Common myeloid progenitor, CD34-positive (primary cell): ENCODE measurements at regions of chr5 and their contacts with region 1.

Region 1: DNA sequence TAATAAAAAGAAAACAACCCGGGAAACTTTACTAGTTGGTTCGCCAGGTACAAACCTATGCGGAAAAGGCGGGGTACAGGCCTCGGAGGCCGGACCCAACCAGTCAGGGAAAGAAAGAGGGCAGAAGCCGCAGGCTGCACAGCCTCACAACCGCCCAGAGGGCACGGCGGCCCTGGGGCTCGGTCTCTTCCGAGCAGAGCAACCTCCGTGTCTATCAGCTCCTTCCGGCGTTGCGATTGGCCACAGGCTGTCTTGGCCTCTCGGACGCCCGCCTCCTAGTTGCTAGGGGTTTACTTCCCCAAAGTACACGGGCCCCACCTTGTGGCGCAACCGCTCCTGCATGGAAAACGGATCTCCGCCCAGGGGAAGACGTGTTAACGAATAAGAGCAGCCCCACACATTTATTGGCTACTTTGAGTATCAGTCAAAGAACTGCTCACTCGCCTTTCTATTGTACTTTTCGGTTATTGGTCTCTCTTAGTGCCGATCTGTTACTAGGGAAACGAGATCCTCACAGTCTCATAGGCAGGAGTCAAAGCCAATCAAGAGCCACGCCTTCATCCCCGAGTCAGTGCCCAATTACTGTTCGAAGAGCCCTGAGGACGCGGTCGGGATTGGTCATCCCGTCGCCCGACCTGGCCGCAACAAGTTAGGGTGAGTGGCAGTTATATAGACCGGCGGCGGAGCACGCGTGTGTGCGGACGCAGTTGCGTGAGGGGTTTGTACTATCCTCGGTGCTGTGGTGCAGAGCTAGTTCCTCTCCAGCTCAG is at the start of gene G3BP1:
- DNase-seq: peak; percentile 100
- H3K4me3 ChIP-seq: peak within 1 kb of the TSS; percentile 68 to 98 (median 92)
- H3K27ac ChIP-seq: peak within 1 kb of the TSS; percentile 93 to 96
- H3K4me1 ChIP-seq: peaks cover 15 to 48% (median 33%) of the 10 kb centered on the region in 4 experiments
- H3K27me3 ChIP-seq: no peaks in the 10 kb centered on the region

Region 2: GRCh38 chr5:151758430-151759241 is 12.8 kb before region 1 on chr5 and contains the start of gene ATOX1:
- CTCF ChIA-PET with region 1: interaction called, 38 read pairs
- POLR2A ChIA-PET with region 1: interaction called, 9 read pairs
- DNase-seq: peak; percentile 82 to 90 (median 90)
- H3K4me3 ChIP-seq: peak within 1 kb of the TSS; percentile 74 to 96 (median 83)
- H3K27ac ChIP-seq: peak within 1 kb of the TSS in 1 of 2 experiments; percentile 79
- H3K4me1 ChIP-seq: peaks cover 7 to 30% (median 25%) of the 10 kb centered on the region in 4 experiments
- H3K27me3 ChIP-seq: no peaks in the 10 kb centered on the region

Region 3: GRCh38 chr5:151811593-151812321 is 40.3 kb after region 1 on chr5:
- CTCF ChIA-PET with region 1: no interaction called
- POLR2A ChIA-PET with region 1: no interaction called
- DNase-seq: no peak
- H3K4me3 ChIP-seq: no peak overlapping the region
- H3K27ac ChIP-seq: no peak overlapping the region
- H3K4me1 ChIP-seq: no peaks in the 10 kb centered on the region
- H3K27me3 ChIP-seq: no peaks in the 10 kb centered on the region

Region 4: GRCh38 chr5:151825445-151825844 is 54.0 kb after region 1 on chr5:
- CTCF ChIA-PET with region 1: no interaction called
- POLR2A ChIA-PET with region 1: no interaction called
- DNase-seq: peak; percentile 17 to 43 (median 24)
- H3K4me3 ChIP-seq: no peak overlapping the region
- H3K27ac ChIP-seq: no peak overlapping the region
- H3K4me1 ChIP-seq: peaks cover 0 to 6% (median 1%) of the 10 kb centered on the region in 4 experiments
- H3K27me3 ChIP-seq: no peaks in the 10 kb centered on the region